ENCODE measurements at regions of chr11 and their contacts with region 1.

Region 1: GRCh38 chr11:10838083-10838482 is 19.8 kb downstream of the ZBED5 start:
- DNase-seq: no peak
- ATAC-seq: no peak
- H3K4me3 ChIP-seq: no peak overlapping the region
- H3K4me3 Mint-ChIP-seq: no peak overlapping the region
- H3K27ac ChIP-seq: no peak overlapping the region
- H3K27ac Mint-ChIP-seq: no peak overlapping the region
- H3K4me1 ChIP-seq: no peaks in the 10 kb centered on the region
- H3K4me1 Mint-ChIP-seq: peaks cover 7% of the 10 kb centered on the region
- H3K27me3 ChIP-seq: no peaks in the 10 kb centered on the region
- H3K27me3 Mint-ChIP-seq: no peaks in the 10 kb centered on the region
- CTCF ChIP-seq: no peak

Region 2: DNA sequence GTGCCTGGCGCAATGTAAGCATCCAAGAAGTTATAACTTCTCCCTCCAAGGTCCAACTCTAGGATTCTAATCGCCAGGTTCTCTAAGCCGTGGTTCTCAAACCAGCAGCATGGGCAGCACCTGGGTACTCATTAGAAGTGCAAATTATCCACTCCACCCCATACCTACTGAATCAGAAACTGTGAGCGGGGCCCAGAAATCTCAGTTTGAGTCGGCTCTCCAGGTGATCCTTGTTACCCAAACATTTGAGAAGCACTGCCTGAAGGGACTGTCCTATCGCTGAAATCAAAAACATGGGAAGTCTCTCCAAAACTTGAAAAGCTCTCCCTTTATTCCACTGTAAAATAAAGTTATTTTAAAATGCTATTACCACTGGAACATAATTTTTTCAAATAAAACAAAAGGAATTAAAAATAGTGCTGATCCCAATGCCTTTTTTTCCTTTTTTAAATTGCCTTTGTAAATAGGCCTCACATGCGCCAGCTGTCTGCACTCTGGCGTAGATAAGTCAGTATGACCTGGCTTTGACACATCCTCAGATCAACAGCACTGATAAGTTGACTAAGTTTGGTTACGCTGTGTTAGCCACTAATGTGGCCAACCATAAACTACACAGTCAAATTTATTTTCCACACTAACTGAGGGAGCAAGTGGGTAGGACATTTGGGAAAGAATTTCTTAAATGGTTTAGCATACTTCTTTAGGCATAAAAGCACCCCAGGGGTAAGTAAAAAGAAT is 95.4 kb before region 1 on chr11:
- CTCF ChIA-PET with region 1: no interaction called
- POLR2A ChIA-PET with region 1: no interaction called
- intact Hi-C with region 1: loop called in 1 of 2 experiments (anchors 1 kb)
- DNase-seq: peak in 6 of 9 experiments; percentile 22 to 78 (median 41)
- ATAC-seq: peak; percentile 87
- H3K4me3 ChIP-seq: no peak overlapping the region
- H3K4me3 Mint-ChIP-seq: peak overlapping the region; percentile 69
- H3K27ac ChIP-seq: peak overlapping the region in 1 of 2 experiments; percentile 49
- H3K27ac Mint-ChIP-seq: peak overlapping the region; percentile 85
- H3K4me1 ChIP-seq: peaks cover 29% of the 10 kb centered on the region
- H3K4me1 Mint-ChIP-seq: peaks cover 37% of the 10 kb centered on the region
- H3K27me3 ChIP-seq: no peaks in the 10 kb centered on the region
- H3K27me3 Mint-ChIP-seq: no peaks in the 10 kb centered on the region
- CTCF ChIP-seq: no peak

Region 3: GRCh38 chr11:10824888-10825287 is 13.2 kb before region 1 on chr11:
- CTCF ChIA-PET with region 1: no interaction called
- POLR2A ChIA-PET with region 1: no interaction called
- intact Hi-C with region 1: loop called in 1 of 2 experiments (anchors 2 kb)
- DNase-seq: no peak
- ATAC-seq: no peak
- H3K4me3 ChIP-seq: no peak overlapping the region
- H3K4me3 Mint-ChIP-seq: no peak overlapping the region
- H3K27ac ChIP-seq: no peak overlapping the region
- H3K27ac Mint-ChIP-seq: peak overlapping the region; percentile 27
- H3K4me1 ChIP-seq: no peaks in the 10 kb centered on the region
- H3K4me1 Mint-ChIP-seq: peaks cover 7% of the 10 kb centered on the region
- H3K27me3 ChIP-seq: no peaks in the 10 kb centered on the region
- H3K27me3 Mint-ChIP-seq: no peaks in the 10 kb centered on the region
- CTCF ChIP-seq: no peak

Region 4: GRCh38 chr11:11635443-11635842 is 797.4 kb after region 1 on chr11:
- CTCF ChIA-PET with region 1: no interaction called
- POLR2A ChIA-PET with region 1: no interaction called
- intact Hi-C with region 1: no loop called
- DNase-seq: no peak
- ATAC-seq: no peak
- H3K4me3 ChIP-seq: no peak overlapping the region
- H3K4me3 Mint-ChIP-seq: no peak overlapping the region
- H3K27ac ChIP-seq: no peak overlapping the region
- H3K27ac Mint-ChIP-seq: no peak overlapping the region
- H3K4me1 ChIP-seq: no peaks in the 10 kb centered on the region
- H3K4me1 Mint-ChIP-seq: no peaks in the 10 kb centered on the region
- H3K27me3 ChIP-seq: peaks cover 0 to 3% of the 10 kb centered on the region in 2 experiments
- H3K27me3 Mint-ChIP-seq: peaks cover 19% of the 10 kb centered on the region
- CTCF ChIP-seq: no peak